ENCODE measurements at regions of chr11 and their contacts with region 1.

Region 1: GRCh38 chr11:111320728-111321568 is 22.6 kb downstream of the POU2AF3 start:
- DNase-seq: no peak
- ATAC-seq: no peak
- H3K4me3 ChIP-seq: no peak overlapping the region
- H3K27ac ChIP-seq: peak overlapping the region in 1 of 2 donors; percentile 39
- H3K4me1 ChIP-seq: peaks cover 2 to 4% of the 10 kb centered on the region in 2 donors
- H3K27me3 ChIP-seq: no peaks in the 10 kb centered on the region

Region 2: DNA sequence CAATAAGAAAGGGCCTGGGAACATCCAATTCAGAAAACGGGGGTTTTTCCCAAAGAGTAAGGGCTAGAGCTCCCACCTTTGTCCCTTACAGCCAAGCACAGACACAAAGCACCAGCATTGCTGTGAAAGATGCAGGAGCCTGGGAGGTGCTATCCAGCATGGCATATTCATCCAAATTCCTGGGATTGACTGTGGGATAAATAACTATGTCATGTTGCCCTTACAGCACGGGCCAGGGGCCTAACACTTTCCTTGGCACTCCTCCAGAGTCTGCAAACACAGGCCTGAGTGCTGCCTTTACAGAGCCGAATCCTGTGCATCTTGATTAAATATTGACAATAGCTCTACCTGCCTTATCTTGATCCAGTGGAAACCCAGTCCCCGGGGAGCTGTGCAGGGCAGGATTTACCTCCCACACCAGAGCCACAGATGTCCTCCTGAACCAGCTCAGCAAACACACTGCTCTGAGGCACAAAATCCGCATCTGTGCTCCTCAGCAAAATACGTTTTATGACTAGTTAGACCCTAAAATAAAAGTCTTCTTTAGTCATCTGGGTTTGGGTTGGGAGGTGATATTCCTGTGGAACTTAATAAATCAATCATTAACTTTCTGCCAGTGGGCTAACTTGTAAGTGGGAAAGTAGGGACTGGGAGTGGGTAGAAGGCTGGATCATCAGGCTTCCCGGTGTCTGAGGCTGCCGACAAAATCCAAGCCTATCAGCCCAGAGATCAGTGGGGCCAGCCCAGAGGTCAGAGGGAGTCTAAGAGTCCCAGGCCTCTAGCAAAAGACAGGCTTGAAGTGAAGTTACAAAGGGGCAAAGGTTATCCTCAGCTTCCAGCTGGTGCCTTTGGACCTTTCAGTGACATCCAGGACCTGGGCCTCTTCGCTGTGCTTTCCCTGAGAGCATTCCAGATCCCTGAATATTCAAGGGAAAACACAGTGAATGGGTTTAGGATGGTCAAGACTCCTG is 13.9 kb after region 1 on chr11:
- intact Hi-C with region 1: loop called in 1 of 2 experiments (anchors 2 kb)
- DNase-seq: no peak
- ATAC-seq: no peak
- H3K4me3 ChIP-seq: no peak overlapping the region
- H3K27ac ChIP-seq: peak overlapping the region in 1 of 2 donors; percentile 3
- H3K4me1 ChIP-seq: peaks cover 0 to 7% of the 10 kb centered on the region in 2 donors
- H3K27me3 ChIP-seq: no peaks in the 10 kb centered on the region

Measured in aorta (tissue), 5 donors.